ENCODE measurements at regions of chr1 and their contacts with region 1.

Region 1: GRCh38 chr1:19485362-19486187 is at the start of gene CAPZB:
- DNase-seq: peak; percentile 89 to 97 (median 96)
- ATAC-seq: peak; percentile 81
- H3K4me3 ChIP-seq: peak within 1 kb of the TSS; percentile 78
- H3K4me3 Mint-ChIP-seq: peak within 1 kb of the TSS; percentile 94
- H3K27ac ChIP-seq: peak within 1 kb of the TSS; percentile 80 to 88
- H3K27ac Mint-ChIP-seq: peak within 1 kb of the TSS; percentile 97
- H3K4me1 ChIP-seq: peaks cover 68% of the 10 kb centered on the region
- H3K4me1 Mint-ChIP-seq: peaks cover 68% of the 10 kb centered on the region
- H3K27me3 ChIP-seq: no peaks in the 10 kb centered on the region
- H3K27me3 Mint-ChIP-seq: no peaks in the 10 kb centered on the region
- CTCF ChIP-seq: no peak
- total RNA-seq, gene CAPZB: 168 to 173 TPM

Region 2: DNA sequence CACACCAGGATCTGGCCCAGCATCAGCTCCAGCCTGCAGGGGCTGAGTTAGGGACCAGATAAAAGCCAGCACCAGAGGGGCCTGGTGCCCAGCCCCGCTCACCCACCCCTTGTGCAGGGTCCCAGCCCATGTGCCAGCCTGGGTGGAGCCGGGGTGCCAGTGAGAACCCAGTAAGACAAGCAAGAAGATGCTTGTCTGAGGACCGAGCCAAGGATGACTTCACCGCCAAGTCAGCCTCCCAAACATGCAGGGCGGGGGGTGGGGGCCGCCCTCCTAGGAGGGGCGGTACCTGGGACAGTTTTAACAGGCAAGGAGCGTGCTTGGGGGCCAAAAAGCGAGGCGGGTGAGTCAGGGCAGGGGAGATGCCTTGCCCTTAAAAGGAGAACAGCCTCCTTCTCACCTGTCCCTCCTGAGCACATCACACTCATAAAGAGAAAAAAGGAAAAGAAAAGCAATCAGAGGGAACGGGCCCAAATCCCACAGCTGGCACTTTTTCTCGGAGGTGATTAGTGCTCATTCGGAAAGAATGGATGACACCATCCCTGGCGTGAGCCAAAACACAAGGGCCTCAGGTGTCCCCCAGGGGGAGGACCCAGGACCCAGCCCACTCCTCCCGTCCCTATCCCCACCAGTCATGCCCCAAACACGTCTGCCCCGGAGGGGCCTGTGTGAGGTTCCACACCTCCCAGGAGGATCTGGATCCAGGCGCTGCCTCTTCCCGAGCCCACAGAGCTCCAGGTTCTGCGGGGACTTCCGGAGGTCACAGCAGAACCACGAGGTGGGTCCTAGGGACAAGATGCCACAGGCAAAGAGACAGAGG is 451.5 kb before region 1 on chr1:
- CTCF ChIA-PET with region 1: no interaction called
- POLR2A ChIA-PET with region 1: no interaction called
- intact Hi-C with region 1: no loop called
- DNase-seq: peak in 1 of 14 experiments; percentile 14
- ATAC-seq: no peak
- H3K4me3 ChIP-seq: no peak overlapping the region
- H3K4me3 Mint-ChIP-seq: no peak overlapping the region
- H3K27ac ChIP-seq: no peak overlapping the region
- H3K27ac Mint-ChIP-seq: no peak overlapping the region
- H3K4me1 ChIP-seq: no peaks in the 10 kb centered on the region
- H3K4me1 Mint-ChIP-seq: no peaks in the 10 kb centered on the region
- H3K27me3 ChIP-seq: peaks cover 0 to 2% of the 10 kb centered on the region in 2 experiments
- H3K27me3 Mint-ChIP-seq: no peaks in the 10 kb centered on the region
- CTCF ChIP-seq: no peak

Region 3: GRCh38 chr1:19209990-19210771 is 275.4 kb before region 1 on chr1 and contains the start of gene UBR4:
- CTCF ChIA-PET with region 1: no interaction called
- POLR2A ChIA-PET with region 1: interaction called, 4 read pairs
- intact Hi-C with region 1: loop called in 1 of 2 experiments (anchors 5 kb)
- DNase-seq: peak; percentile 92 to 99 (median 96)
- ATAC-seq: peak; percentile 92
- H3K4me3 ChIP-seq: peak within 1 kb of the TSS; percentile 93
- H3K4me3 Mint-ChIP-seq: peak within 1 kb of the TSS; percentile 96
- H3K27ac ChIP-seq: peak within 1 kb of the TSS; percentile 87 to 92
- H3K27ac Mint-ChIP-seq: peak within 1 kb of the TSS; percentile 95
- H3K4me1 ChIP-seq: peaks cover 42% of the 10 kb centered on the region
- H3K4me1 Mint-ChIP-seq: peaks cover 77% of the 10 kb centered on the region
- H3K27me3 ChIP-seq: no peaks in the 10 kb centered on the region
- H3K27me3 Mint-ChIP-seq: no peaks in the 10 kb centered on the region
- CTCF ChIP-seq: no peak
- total RNA-seq, gene UBR4: 116 to 125 TPM

Region 4: GRCh38 chr1:19311959-19312781 is 173.4 kb before region 1 on chr1 and contains the starts of genes AKR7A2 and SLC66A1:
- CTCF ChIA-PET with region 1: no interaction called
- POLR2A ChIA-PET with region 1: no interaction called
- intact Hi-C with region 1: loop called in 1 of 2 experiments (anchors 5 kb)
- DNase-seq: peak; percentile 78 to 96 (median 87)
- ATAC-seq: peak; percentile 98
- H3K4me3 ChIP-seq: peak within 1 kb of the TSS; percentile 90
- H3K4me3 Mint-ChIP-seq: peak within 1 kb of the TSS; percentile 95
- H3K27ac ChIP-seq: peak within 1 kb of the TSS in 1 of 2 donors; percentile 22
- H3K27ac Mint-ChIP-seq: peak within 1 kb of the TSS; percentile 55
- H3K4me1 ChIP-seq: peaks cover 45% of the 10 kb centered on the region
- H3K4me1 Mint-ChIP-seq: peaks cover 35% of the 10 kb centered on the region
- H3K27me3 ChIP-seq: no peaks in the 10 kb centered on the region
- H3K27me3 Mint-ChIP-seq: no peaks in the 10 kb centered on the region
- CTCF ChIP-seq: no peak
- total RNA-seq, gene AKR7A2: 11.1 to 11.8 TPM
- total RNA-seq, gene SLC66A1: 2.3 to 3.7 TPM

Region 5: GRCh38 chr1:19353596-19353995 is 132.0 kb before region 1 on chr1:
- CTCF ChIA-PET with region 1: no interaction called
- POLR2A ChIA-PET with region 1: no interaction called
- intact Hi-C with region 1: no loop called
- DNase-seq: no peak
- ATAC-seq: no peak
- H3K4me3 ChIP-seq: no peak overlapping the region
- H3K4me3 Mint-ChIP-seq: no peak overlapping the region
- H3K27ac ChIP-seq: no peak overlapping the region
- H3K27ac Mint-ChIP-seq: no peak overlapping the region
- H3K4me1 ChIP-seq: no peaks in the 10 kb centered on the region
- H3K4me1 Mint-ChIP-seq: peaks cover 7% of the 10 kb centered on the region
- H3K27me3 ChIP-seq: no peaks in the 10 kb centered on the region
- H3K27me3 Mint-ChIP-seq: no peaks in the 10 kb centered on the region
- CTCF ChIP-seq: no peak

Region 6: DNA sequence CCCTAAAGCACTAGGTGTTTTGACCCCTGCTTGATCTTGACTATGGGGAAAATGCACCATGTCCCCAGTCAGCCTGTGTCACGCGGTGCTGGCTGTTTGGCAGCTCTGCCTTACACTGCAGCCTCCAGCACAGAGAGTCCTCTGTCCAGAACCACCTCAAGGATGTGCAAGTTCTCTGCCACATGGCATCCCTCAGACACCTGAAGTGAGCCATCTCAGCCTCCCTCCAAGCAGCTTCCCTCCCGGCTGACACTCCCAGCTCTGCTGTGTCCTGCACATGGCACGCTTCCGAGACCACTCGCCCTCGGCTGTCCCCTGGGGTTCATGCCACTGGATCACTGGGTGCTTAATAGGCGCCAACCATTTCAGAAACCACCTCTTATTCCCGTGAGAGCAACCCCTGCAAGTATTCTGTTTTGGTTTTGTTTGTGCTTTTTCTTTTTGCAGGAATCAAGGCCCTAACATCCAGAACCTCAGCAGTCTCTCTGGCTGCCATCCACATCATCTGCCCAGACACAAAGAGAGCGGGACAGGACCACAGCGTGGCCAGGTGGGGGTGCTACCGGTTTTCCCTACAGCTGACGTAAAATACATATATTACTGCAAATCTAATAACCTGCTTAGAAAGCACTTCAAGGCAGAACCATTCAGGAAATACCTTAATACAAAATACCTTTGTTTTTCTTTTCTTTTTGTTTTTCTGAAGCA is 46.0 kb before region 1 on chr1:
- CTCF ChIA-PET with region 1: interaction called, 6 read pairs
- POLR2A ChIA-PET with region 1: interaction called, 7 read pairs
- intact Hi-C with region 1: loop called in 1 of 2 experiments (anchors 5 kb)
- DNase-seq: peak; percentile 21 to 71 (median 47)
- ATAC-seq: peak; percentile 72
- H3K4me3 ChIP-seq: no peak overlapping the region
- H3K4me3 Mint-ChIP-seq: peak overlapping the region; percentile 52
- H3K27ac ChIP-seq: peak overlapping the region in 1 of 2 donors; percentile 26
- H3K27ac Mint-ChIP-seq: peak overlapping the region; percentile 76
- H3K4me1 ChIP-seq: peaks cover 87% of the 10 kb centered on the region
- H3K4me1 Mint-ChIP-seq: peaks cover 94% of the 10 kb centered on the region
- H3K27me3 ChIP-seq: no peaks in the 10 kb centered on the region
- H3K27me3 Mint-ChIP-seq: no peaks in the 10 kb centered on the region
- CTCF ChIP-seq: peak; percentile 54

Region 7: GRCh38 chr1:19462781-19463503 is 22.6 kb before region 1 on chr1:
- CTCF ChIA-PET with region 1: interaction called, 6 read pairs
- POLR2A ChIA-PET with region 1: interaction called, 442 read pairs
- intact Hi-C with region 1: loop called (anchors 1 kb)
- DNase-seq: peak; percentile 55 to 91 (median 69)
- ATAC-seq: peak; percentile 78
- H3K4me3 ChIP-seq: peak overlapping the region; percentile 24
- H3K4me3 Mint-ChIP-seq: peak overlapping the region; percentile 81
- H3K27ac ChIP-seq: peak overlapping the region; percentile 42 to 93
- H3K27ac Mint-ChIP-seq: peak overlapping the region; percentile 86
- H3K4me1 ChIP-seq: peaks cover 100% of the 10 kb centered on the region
- H3K4me1 Mint-ChIP-seq: peaks cover 88% of the 10 kb centered on the region
- H3K27me3 ChIP-seq: no peaks in the 10 kb centered on the region
- H3K27me3 Mint-ChIP-seq: no peaks in the 10 kb centered on the region
- CTCF ChIP-seq: no peak

Region 8: GRCh38 chr1:19582302-19582701 is 96.7 kb after region 1 on chr1:
- CTCF ChIA-PET with region 1: interaction called, 20 read pairs
- POLR2A ChIA-PET with region 1: interaction called, 3 read pairs
- intact Hi-C with region 1: loop called (anchors 2 to 5 kb)
- DNase-seq: peak; percentile 59 to 88 (median 76)
- ATAC-seq: peak; percentile 77
- H3K4me3 ChIP-seq: no peak overlapping the region
- H3K4me3 Mint-ChIP-seq: no peak overlapping the region
- H3K27ac ChIP-seq: no peak overlapping the region
- H3K27ac Mint-ChIP-seq: no peak overlapping the region
- H3K4me1 ChIP-seq: peaks cover 11% of the 10 kb centered on the region
- H3K4me1 Mint-ChIP-seq: peaks cover 9% of the 10 kb centered on the region
- H3K27me3 ChIP-seq: no peaks in the 10 kb centered on the region
- H3K27me3 Mint-ChIP-seq: peaks cover 4% of the 10 kb centered on the region
- CTCF ChIP-seq: peak; percentile 91

Region 9: DNA sequence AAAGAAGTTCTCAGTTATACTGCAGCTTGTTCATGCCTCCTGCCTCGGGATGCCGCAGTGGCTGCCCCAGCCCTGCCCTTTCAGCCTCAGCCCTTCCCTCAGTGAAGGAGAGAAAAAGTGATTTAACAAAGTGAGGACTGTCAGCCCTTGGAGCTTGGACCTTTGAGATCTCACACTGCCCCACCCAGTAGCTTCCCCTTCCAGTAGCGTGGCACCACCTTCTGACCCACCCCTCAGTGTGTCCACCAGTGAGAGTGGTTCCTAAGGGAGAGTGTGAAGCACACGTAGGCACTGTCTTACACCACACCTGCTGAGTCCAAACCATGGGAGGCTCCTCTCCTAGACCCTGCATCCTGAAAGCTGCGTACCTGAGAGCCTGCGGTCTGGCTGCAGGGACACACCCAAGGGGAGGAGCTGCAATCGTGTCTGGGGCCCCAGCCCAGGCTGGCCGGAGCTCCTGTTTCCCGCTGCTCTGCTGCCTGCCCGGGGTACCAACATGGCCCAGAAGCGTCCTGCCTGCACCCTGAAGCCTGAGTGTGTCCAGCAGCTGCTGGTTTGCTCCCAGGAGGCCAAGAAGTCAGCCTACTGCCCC is 1103.2 kb after region 1 on chr1 and contains the start of gene CDA:
- CTCF ChIA-PET with region 1: no interaction called
- POLR2A ChIA-PET with region 1: no interaction called
- intact Hi-C with region 1: no loop called
- DNase-seq: no peak
- ATAC-seq: no peak
- H3K4me3 ChIP-seq: peak within 1 kb of the TSS; percentile 18
- H3K4me3 Mint-ChIP-seq: no peak within 1 kb of the TSS
- H3K27ac ChIP-seq: no peak within 1 kb of the TSS
- H3K27ac Mint-ChIP-seq: no peak within 1 kb of the TSS
- H3K4me1 ChIP-seq: peaks cover 5% of the 10 kb centered on the region
- H3K4me1 Mint-ChIP-seq: peaks cover 6% of the 10 kb centered on the region
- H3K27me3 ChIP-seq: peaks cover 24 to 40% of the 10 kb centered on the region in 2 experiments
- H3K27me3 Mint-ChIP-seq: peaks cover 82% of the 10 kb centered on the region
- CTCF ChIP-seq: no peak
- total RNA-seq, gene CDA: 0.38 to 0.50 TPM